GM12878 (cell line): ENCODE measurements at regions of chr7 and their contacts with region 1.

Region 1: GRCh38 chr7:98922393-98923187 is 44.3 kb downstream of the TRRAP start:
- DNase-seq: no peak
- ATAC-seq: no peak
- H3K4me3 ChIP-seq: no peak overlapping the region
- H3K27ac ChIP-seq: no peak overlapping the region
- H3K4me1 ChIP-seq: no peaks in the 10 kb centered on the region
- H3K27me3 ChIP-seq: no peaks in the 10 kb centered on the region
- CTCF ChIP-seq: no peak
- EP300 ChIP-seq: no peak
- POLR2A ChIP-seq: no peak
- RAD21 ChIP-seq: no peak

Region 2: DNA sequence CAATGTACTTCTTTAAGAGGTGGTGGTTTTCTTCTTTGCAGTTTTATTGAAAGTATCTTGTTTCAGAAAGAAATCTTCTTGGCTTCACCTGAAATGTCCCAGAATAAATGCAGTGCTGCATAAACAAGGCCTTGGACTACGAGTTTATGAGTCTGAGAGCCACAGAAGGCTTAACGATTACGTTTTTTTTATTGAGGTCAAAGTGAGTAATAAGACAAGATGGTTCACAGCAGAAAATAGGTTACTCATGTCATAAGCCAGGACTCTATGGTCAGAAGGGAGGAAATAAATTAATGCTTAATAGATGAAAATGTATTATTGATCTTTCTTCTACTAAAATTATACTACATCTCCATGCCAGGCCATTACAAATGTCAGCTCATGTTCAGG is 319.2 kb before region 1 on chr7:
- CTCF ChIA-PET with region 1: no interaction called
- POLR2A ChIA-PET with region 1: no interaction called
- RAD21 ChIA-PET with region 1: no interaction called
- SMC1A ChIA-PET with region 1: no interaction called
- in situ Hi-C with region 1: no loop called
- intact Hi-C with region 1: no loop called
- DNase-seq: no peak
- ATAC-seq: no peak
- H3K4me3 ChIP-seq: no peak overlapping the region
- H3K27ac ChIP-seq: no peak overlapping the region
- H3K4me1 ChIP-seq: no peaks in the 10 kb centered on the region
- H3K27me3 ChIP-seq: peaks cover 0 to 2% of the 10 kb centered on the region in 2 experiments; a peak in 2 of 4 replicates
- CTCF ChIP-seq: no peak
- EP300 ChIP-seq: no peak
- POLR2A ChIP-seq: no peak
- RAD21 ChIP-seq: no peak

Region 3: GRCh38 chr7:98713165-98713810 is 209.3 kb before region 1 on chr7:
- CTCF ChIA-PET with region 1: no interaction called
- POLR2A ChIA-PET with region 1: no interaction called
- RAD21 ChIA-PET with region 1: no interaction called
- SMC1A ChIA-PET with region 1: no interaction called
- in situ Hi-C with region 1: no loop called
- intact Hi-C with region 1: no loop called
- DNase-seq: no peak
- ATAC-seq: no peak
- H3K4me3 ChIP-seq: no peak overlapping the region
- H3K27ac ChIP-seq: no peak overlapping the region
- H3K4me1 ChIP-seq: no peaks in the 10 kb centered on the region
- H3K27me3 ChIP-seq: no peaks in the 10 kb centered on the region
- CTCF ChIP-seq: no peak
- EP300 ChIP-seq: no peak
- POLR2A ChIP-seq: no peak
- RAD21 ChIP-seq: no peak

Region 4: GRCh38 chr7:98902523-98902922 is 20.1 kb before region 1 on chr7:
- CTCF ChIA-PET with region 1: no interaction called
- POLR2A ChIA-PET with region 1: no interaction called
- RAD21 ChIA-PET with region 1: no interaction called
- SMC1A ChIA-PET with region 1: no interaction called
- in situ Hi-C with region 1: no loop called
- intact Hi-C with region 1: no loop called
- DNase-seq: no peak
- ATAC-seq: no peak
- H3K4me3 ChIP-seq: no peak overlapping the region
- H3K27ac ChIP-seq: no peak overlapping the region
- H3K4me1 ChIP-seq: no peaks in the 10 kb centered on the region
- H3K27me3 ChIP-seq: no peaks in the 10 kb centered on the region
- CTCF ChIP-seq: no peak
- EP300 ChIP-seq: no peak
- POLR2A ChIP-seq: no peak
- RAD21 ChIP-seq: no peak

Region 5: GRCh38 chr7:98963305-98963704 is 40.7 kb after region 1 on chr7:
- CTCF ChIA-PET with region 1: no interaction called
- POLR2A ChIA-PET with region 1: interaction called, 11 read pairs
- RAD21 ChIA-PET with region 1: no interaction called
- SMC1A ChIA-PET with region 1: no interaction called
- in situ Hi-C with region 1: no loop called
- intact Hi-C with region 1: no loop called
- DNase-seq: no peak
- ATAC-seq: no peak
- H3K4me3 ChIP-seq: no peak overlapping the region
- H3K27ac ChIP-seq: no peak overlapping the region
- H3K4me1 ChIP-seq: no peaks in the 10 kb centered on the region
- H3K27me3 ChIP-seq: no peaks in the 10 kb centered on the region
- CTCF ChIP-seq: no peak
- EP300 ChIP-seq: no peak
- POLR2A ChIP-seq: no peak
- RAD21 ChIP-seq: no peak

Region 6: GRCh38 chr7:99126921-99127553 is 204.4 kb after region 1 on chr7:
- CTCF ChIA-PET with region 1: no interaction called
- POLR2A ChIA-PET with region 1: no interaction called
- RAD21 ChIA-PET with region 1: no interaction called
- SMC1A ChIA-PET with region 1: no interaction called
- in situ Hi-C with region 1: no loop called
- intact Hi-C with region 1: no loop called
- DNase-seq: no peak
- ATAC-seq: no peak
- H3K4me3 ChIP-seq: no peak overlapping the region
- H3K27ac ChIP-seq: no peak overlapping the region
- H3K4me1 ChIP-seq: no peaks in the 10 kb centered on the region
- H3K27me3 ChIP-seq: no peaks in the 10 kb centered on the region
- CTCF ChIP-seq: no peak
- EP300 ChIP-seq: no peak
- POLR2A ChIP-seq: no peak
- RAD21 ChIP-seq: no peak